AG04450 (cell line): ENCODE measurements at regions of chr16 and their contacts with region 1.

Region 1: GRCh38 chr16:3305109-3306068 is at the starts of genes TIGD7 and ZNF75A:
- DNase-seq: peak; percentile 66
- H3K4me3 ChIP-seq: peak within 1 kb of the TSS; percentile 87
- H3K27ac ChIP-seq: peak within 1 kb of the TSS; percentile 96
- H3K27me3 ChIP-seq: no peaks in the 10 kb centered on the region
- CTCF ChIP-seq: 0 out of 2 replicates have a peak, but pooled peaks have one; percentile 8
- polyA plus RNA-seq, gene TIGD7: 4.4 and 5.3 TPM in 2 replicates
- polyA plus RNA-seq, gene ZNF75A: 15.9 and 20.3 TPM in 2 replicates

Region 2: DNA sequence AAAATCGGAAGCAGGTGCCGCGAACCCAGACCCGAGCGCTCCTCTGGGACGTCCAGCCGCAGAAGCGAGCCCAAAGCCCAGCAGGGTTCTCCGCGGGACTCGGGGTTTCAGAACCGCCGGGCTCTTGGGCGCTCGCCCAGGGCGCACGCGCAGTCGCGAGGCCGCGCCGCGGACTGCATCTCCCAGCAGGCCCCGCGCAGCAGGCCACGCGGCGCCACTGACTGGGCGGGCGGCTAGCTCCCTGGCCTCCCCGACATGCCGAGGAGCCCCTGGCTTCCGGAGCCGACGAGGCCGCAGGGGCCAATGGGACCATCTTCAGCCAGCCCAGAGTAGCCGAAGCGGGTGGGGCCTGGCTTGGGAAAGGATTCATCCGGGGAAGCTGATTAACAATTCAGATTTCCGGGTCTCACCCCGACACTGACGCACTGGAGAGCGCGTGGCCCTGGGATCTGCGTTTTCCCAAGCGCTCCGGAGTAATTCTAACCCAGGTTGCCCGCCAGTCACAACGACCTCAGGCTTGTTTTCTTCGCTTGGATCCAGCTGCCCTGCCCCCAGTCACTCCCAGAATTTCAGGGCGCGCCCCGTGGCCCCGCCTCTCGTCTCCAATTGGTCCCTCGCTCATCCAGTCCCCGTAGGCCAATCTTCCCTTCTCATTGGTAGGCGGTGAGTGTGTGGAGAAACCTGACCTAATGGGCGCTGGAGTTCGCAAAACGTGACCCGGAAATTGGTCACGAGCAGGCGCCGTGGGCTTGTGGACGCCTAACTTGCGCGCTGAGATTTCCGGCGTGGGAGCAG is 22.5 kb before region 1 on chr16 and contains the start of gene ZNF263:
- CTCF ChIA-PET with region 1: no interaction called
- POLR2A ChIA-PET with region 1: interaction called, 18 read pairs
- DNase-seq: peak; percentile 92
- H3K4me3 ChIP-seq: peak within 1 kb of the TSS; percentile 95
- H3K27ac ChIP-seq: peak within 1 kb of the TSS; percentile 100
- H3K27me3 ChIP-seq: peaks cover 2% of the 10 kb centered on the region
- CTCF ChIP-seq: no peak
- polyA plus RNA-seq, gene ZNF263: 13.2 and 22.5 TPM in 2 replicates